Prostate gland (tissue), 2 donors: ENCODE measurements at regions of chr1 and their contacts with region 1.

Region 1: DNA sequence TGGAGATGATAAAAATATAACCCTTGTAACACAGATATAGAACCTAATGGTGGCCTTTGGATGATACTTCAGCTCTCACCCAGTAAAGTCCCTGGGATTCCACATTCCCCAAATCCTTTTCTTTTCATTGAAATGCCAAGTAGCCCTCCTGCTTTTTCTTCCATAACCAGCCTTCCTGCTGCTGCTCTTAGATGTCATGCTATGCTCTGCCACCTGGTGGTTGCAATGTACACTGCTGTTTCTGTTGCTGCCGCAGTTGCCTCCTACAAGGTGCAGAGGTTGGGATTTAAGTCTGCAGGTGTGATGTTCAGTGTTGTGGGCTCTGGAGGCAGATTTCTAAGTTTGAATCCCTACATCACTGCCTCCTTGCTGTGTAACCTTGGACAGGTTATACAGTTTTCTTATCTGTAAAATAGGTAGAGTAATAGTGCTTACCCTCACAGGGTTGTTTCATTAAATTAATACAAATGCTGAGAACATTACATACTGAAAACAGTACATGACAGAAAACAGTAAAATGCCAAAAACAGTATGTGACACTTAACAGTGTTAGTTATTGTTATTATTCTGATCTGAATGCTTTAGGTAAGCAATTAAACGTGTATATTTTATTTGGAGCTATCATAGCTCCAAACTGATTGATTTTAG is 64.3 kb downstream of the CAMSAP2 start:
- DNase-seq: peak; percentile 80
- H3K4me3 ChIP-seq: no peak overlapping the region
- H3K27ac ChIP-seq: no peak overlapping the region
- H3K4me1 ChIP-seq: no peaks in the 10 kb centered on the region
- H3K27me3 ChIP-seq: no peaks in the 10 kb centered on the region
- CTCF ChIP-seq: peak; percentile 75 to 92 (median 88)
- POLR2A ChIP-seq: no peak

Region 2: DNA sequence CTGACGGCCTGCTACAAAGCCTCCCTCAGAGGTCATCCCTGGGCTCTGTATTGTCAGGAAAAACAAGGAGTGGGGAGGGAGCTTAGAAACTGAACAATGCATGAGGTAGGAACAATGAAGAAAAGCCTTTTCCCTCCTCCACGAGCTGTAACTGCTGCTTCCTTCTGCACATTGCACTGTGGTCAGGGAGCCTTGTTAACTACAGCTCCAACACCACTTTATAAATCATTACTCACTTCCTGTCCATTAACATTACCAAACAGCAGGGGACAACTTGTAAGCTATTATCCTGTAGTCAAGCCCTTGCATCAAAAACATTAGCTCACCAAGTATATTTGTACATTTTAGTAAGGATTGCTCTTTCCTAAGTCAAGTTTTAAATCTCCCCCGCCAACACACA is 1111.4 kb before region 1 on chr1:
- intact Hi-C with region 1: no loop called
- DNase-seq: no peak
- H3K4me3 ChIP-seq: no peak overlapping the region
- H3K27ac ChIP-seq: no peak overlapping the region
- H3K4me1 ChIP-seq: no peaks in the 10 kb centered on the region
- H3K27me3 ChIP-seq: no peaks in the 10 kb centered on the region
- CTCF ChIP-seq: no peak
- POLR2A ChIP-seq: no peak

Region 3: GRCh38 chr1:200526709-200527612 is 276.0 kb before region 1 on chr1:
- intact Hi-C with region 1: no loop called
- DNase-seq: no peak
- H3K4me3 ChIP-seq: no peak overlapping the region
- H3K27ac ChIP-seq: no peak overlapping the region
- H3K4me1 ChIP-seq: no peaks in the 10 kb centered on the region
- H3K27me3 ChIP-seq: no peaks in the 10 kb centered on the region
- CTCF ChIP-seq: no peak
- POLR2A ChIP-seq: no peak

Region 4: GRCh38 chr1:200620273-200621131 is 182.5 kb before region 1 on chr1 and contains the start of gene KIF14:
- intact Hi-C with region 1: loop called (anchors 5 kb)
- DNase-seq: peak; percentile 88
- H3K4me3 ChIP-seq: peak within 1 kb of the TSS; percentile 47 to 55
- H3K27ac ChIP-seq: peak within 1 kb of the TSS; percentile 29 to 48
- H3K4me1 ChIP-seq: no peaks in the 10 kb centered on the region
- H3K27me3 ChIP-seq: no peaks in the 10 kb centered on the region
- CTCF ChIP-seq: peak in 1 of 4 experiments; percentile 22
- POLR2A ChIP-seq: no peak
- total RNA-seq, gene KIF14: 0.23 to 1.7 TPM

Region 5: GRCh38 chr1:200669314-200670241 is 133.4 kb before region 1 on chr1 and contains the start of gene DDX59:
- intact Hi-C with region 1: loop called (anchors 5 kb)
- DNase-seq: peak; percentile 94
- H3K4me3 ChIP-seq: peak within 1 kb of the TSS; percentile 70 to 88
- H3K27ac ChIP-seq: peak within 1 kb of the TSS; percentile 95 to 98
- H3K4me1 ChIP-seq: no peaks in the 10 kb centered on the region
- H3K27me3 ChIP-seq: no peaks in the 10 kb centered on the region
- CTCF ChIP-seq: peak in 2 of 4 experiments; percentile 12 to 21
- POLR2A ChIP-seq: peak; percentile 71
- total RNA-seq, gene DDX59: 19.5 to 28.1 TPM

Region 6: DNA sequence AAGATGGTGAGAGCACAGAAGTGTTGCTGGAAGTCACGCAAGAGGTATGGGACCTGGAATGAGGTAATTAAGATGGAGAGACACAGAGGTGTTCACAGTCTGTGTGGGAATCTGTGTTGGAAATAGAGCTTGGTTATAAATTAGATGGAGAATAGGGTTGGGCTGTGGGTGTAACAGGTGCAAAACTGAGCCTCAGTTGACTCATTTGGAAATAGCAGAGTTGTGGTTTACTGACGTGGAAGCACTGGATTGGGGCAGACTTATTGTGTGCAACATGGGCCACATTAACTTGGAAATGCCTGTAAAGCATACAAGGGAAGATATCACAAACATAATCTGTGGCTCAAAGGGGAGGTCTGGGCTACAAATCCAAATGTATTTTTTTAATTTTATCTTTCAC is 51.3 kb before region 1 on chr1:
- intact Hi-C with region 1: no loop called
- DNase-seq: no peak
- H3K4me3 ChIP-seq: no peak overlapping the region
- H3K27ac ChIP-seq: no peak overlapping the region
- H3K4me1 ChIP-seq: no peaks in the 10 kb centered on the region
- H3K27me3 ChIP-seq: no peaks in the 10 kb centered on the region
- CTCF ChIP-seq: no peak
- POLR2A ChIP-seq: no peak

Region 7: DNA sequence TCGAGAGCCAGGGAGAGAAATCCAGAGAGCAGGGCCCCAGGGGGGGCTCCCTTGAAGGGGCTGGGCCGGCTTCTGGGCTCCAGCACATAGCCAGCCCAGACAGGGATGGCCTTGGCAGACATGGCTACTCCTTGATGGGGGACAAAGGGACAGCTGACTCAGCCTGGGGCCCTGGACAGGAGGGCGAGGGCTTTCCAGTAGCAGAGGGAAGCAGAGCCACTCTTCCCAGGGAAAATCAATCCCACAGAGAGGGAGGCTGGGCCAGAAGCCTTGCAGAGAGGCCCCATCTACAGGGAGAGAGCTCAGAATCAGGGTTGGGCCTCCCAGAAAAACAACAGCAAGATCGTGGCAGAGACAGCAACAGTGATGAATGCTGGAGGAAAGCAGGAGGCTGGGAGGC is 403.2 kb after region 1 on chr1:
- intact Hi-C with region 1: no loop called
- DNase-seq: no peak
- H3K4me3 ChIP-seq: no peak overlapping the region
- H3K27ac ChIP-seq: no peak overlapping the region
- H3K4me1 ChIP-seq: no peaks in the 10 kb centered on the region
- H3K27me3 ChIP-seq: no peaks in the 10 kb centered on the region
- CTCF ChIP-seq: no peak
- POLR2A ChIP-seq: no peak